ENCODE measurements at regions of chr1 and their contacts with region 1.

Region 1: GRCh38 chr1:1066403-1067283 is 7.5 kb downstream of the RNF223 start:
- DNase-seq: no peak
- H3K4me3 ChIP-seq: no peak overlapping the region
- H3K27ac ChIP-seq: no peak overlapping the region
- H3K4me1 ChIP-seq: peaks cover 5 to 22% of the 10 kb centered on the region in 2 donors
- H3K27me3 ChIP-seq: no peaks in the 10 kb centered on the region
- CTCF ChIP-seq: no peak
- POLR2A ChIP-seq: no peak

Region 2: GRCh38 chr1:788835-789234 is 277.8 kb before region 1 on chr1:
- intact Hi-C with region 1: no loop called
- DNase-seq: no peak
- H3K4me3 ChIP-seq: no peak overlapping the region
- H3K27ac ChIP-seq: no peak overlapping the region
- H3K4me1 ChIP-seq: no peaks in the 10 kb centered on the region
- H3K27me3 ChIP-seq: no peaks in the 10 kb centered on the region
- CTCF ChIP-seq: no peak
- POLR2A ChIP-seq: no peak

Region 3: GRCh38 chr1:912740-913301 is 153.8 kb before region 1 on chr1:
- intact Hi-C with region 1: no loop called
- DNase-seq: peak in 1 of 2 donors; percentile 0
- H3K4me3 ChIP-seq: no peak overlapping the region
- H3K27ac ChIP-seq: no peak overlapping the region
- H3K4me1 ChIP-seq: peaks cover 0 to 10% of the 10 kb centered on the region in 2 donors
- H3K27me3 ChIP-seq: no peaks in the 10 kb centered on the region
- CTCF ChIP-seq: no peak
- POLR2A ChIP-seq: no peak

Region 4: GRCh38 chr1:983799-984473 is 82.7 kb before region 1 on chr1:
- intact Hi-C with region 1: loop called (anchors 2 kb)
- DNase-seq: peak; percentile 40
- H3K4me3 ChIP-seq: no peak overlapping the region
- H3K27ac ChIP-seq: no peak overlapping the region
- H3K4me1 ChIP-seq: no peaks in the 10 kb centered on the region
- H3K27me3 ChIP-seq: no peaks in the 10 kb centered on the region
- CTCF ChIP-seq: peak; percentile 50 to 98 (median 64)
- POLR2A ChIP-seq: no peak